Activated B cell treated with CpG ODN at 0.5 μM for 24 hours (primary cell): ENCODE measurements at regions of chr1 and their contacts with region 1.

Region 1: GRCh38 chr1:42816585-42817434 is at the starts of genes ERMAP and SVBP:
- DNase-seq: peak; percentile 97
- ATAC-seq: peak; percentile 88
- H3K4me3 Mint-ChIP-seq: peak within 1 kb of the TSS; percentile 86
- H3K27ac Mint-ChIP-seq: peak within 1 kb of the TSS; percentile 86
- H3K4me1 Mint-ChIP-seq: peaks cover 20% of the 10 kb centered on the region
- H3K27me3 Mint-ChIP-seq: no peaks in the 10 kb centered on the region
- CTCF ChIP-seq: no peak
- total RNA-seq, gene ERMAP: 7.1 and 10.7 TPM in 2 replicates
- total RNA-seq, gene SVBP: 21.5 and 22.4 TPM in 2 replicates

Region 2: DNA sequence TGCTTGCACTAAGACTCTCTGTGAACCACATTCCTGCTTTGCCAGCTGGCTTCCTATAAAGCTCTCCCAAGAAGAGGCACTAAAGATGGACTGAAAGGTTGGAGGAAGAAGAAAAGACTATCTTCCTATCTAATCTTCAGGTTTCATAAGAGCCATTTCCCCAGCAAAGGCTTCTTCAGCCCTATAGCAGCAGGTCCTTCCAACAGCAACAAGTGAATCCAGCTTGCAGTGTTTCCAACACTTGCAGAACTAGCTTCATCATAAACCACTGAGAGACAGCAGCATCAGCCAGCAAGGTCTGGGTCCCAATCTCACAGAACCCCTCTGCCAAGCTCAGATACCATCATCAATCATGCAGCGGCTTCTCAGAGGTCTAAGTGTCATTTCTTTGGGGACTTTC is 509.8 kb before region 1 on chr1:
- CTCF ChIA-PET with region 1: no interaction called
- POLR2A ChIA-PET with region 1: interaction called, 10 read pairs
- intact Hi-C with region 1: no loop called
- DNase-seq: no peak
- ATAC-seq: no peak
- H3K4me3 Mint-ChIP-seq: no peak overlapping the region
- H3K27ac Mint-ChIP-seq: no peak overlapping the region
- H3K4me1 Mint-ChIP-seq: peaks cover 3% of the 10 kb centered on the region
- H3K27me3 Mint-ChIP-seq: no peaks in the 10 kb centered on the region
- CTCF ChIP-seq: no peak

Region 3: GRCh38 chr1:44354840-44355581 is 1538.2 kb after region 1 on chr1 and contains the start of gene ERI3:
- CTCF ChIA-PET with region 1: no interaction called
- POLR2A ChIA-PET with region 1: no interaction called
- intact Hi-C with region 1: no loop called
- DNase-seq: peak; percentile 91
- ATAC-seq: peak; percentile 99
- H3K4me3 Mint-ChIP-seq: peak within 1 kb of the TSS; percentile 90
- H3K27ac Mint-ChIP-seq: peak within 1 kb of the TSS; percentile 83
- H3K4me1 Mint-ChIP-seq: peaks cover 28% of the 10 kb centered on the region
- H3K27me3 Mint-ChIP-seq: no peaks in the 10 kb centered on the region
- CTCF ChIP-seq: no peak
- total RNA-seq, gene ERI3: 36.2 and 37.9 TPM in 2 replicates